MCF 10A (cell line): ENCODE measurements at regions of chr6 and their contacts with region 1.

Region 1: GRCh38 chr6:107246972-107247615 is 131.8 kb upstream of the BEND3 start:
- DNase-seq: peak; percentile 93
- H3K4me3 Mint-ChIP-seq: peak overlapping the region; percentile 65
- H3K27ac Mint-ChIP-seq: peak overlapping the region; percentile 95
- H3K4me1 Mint-ChIP-seq: peaks cover 25% of the 10 kb centered on the region
- H3K27me3 Mint-ChIP-seq: no peaks in the 10 kb centered on the region
- CTCF ChIP-seq: no peak

Region 2: GRCh38 chr6:107228754-107229153 is 18.3 kb before region 1 on chr6:
- CTCF ChIA-PET with region 1: interaction called, 12 read pairs
- POLR2A ChIA-PET with region 1: interaction called, 23 read pairs
- intact Hi-C with region 1: no loop called
- DNase-seq: no peak
- H3K4me3 Mint-ChIP-seq: no peak overlapping the region
- H3K27ac Mint-ChIP-seq: no peak overlapping the region
- H3K4me1 Mint-ChIP-seq: peaks cover 13% of the 10 kb centered on the region
- H3K27me3 Mint-ChIP-seq: no peaks in the 10 kb centered on the region
- CTCF ChIP-seq: no peak

Region 3: GRCh38 chr6:107264357-107264840 is 17.3 kb after region 1 on chr6:
- CTCF ChIA-PET with region 1: interaction called, 7 read pairs
- POLR2A ChIA-PET with region 1: interaction called, 26 read pairs
- intact Hi-C with region 1: no loop called
- DNase-seq: peak; percentile 69
- H3K4me3 Mint-ChIP-seq: no peak overlapping the region
- H3K27ac Mint-ChIP-seq: peak overlapping the region; percentile 7
- H3K4me1 Mint-ChIP-seq: peaks cover 10% of the 10 kb centered on the region
- H3K27me3 Mint-ChIP-seq: no peaks in the 10 kb centered on the region
- CTCF ChIP-seq: no peak

Region 4: DNA sequence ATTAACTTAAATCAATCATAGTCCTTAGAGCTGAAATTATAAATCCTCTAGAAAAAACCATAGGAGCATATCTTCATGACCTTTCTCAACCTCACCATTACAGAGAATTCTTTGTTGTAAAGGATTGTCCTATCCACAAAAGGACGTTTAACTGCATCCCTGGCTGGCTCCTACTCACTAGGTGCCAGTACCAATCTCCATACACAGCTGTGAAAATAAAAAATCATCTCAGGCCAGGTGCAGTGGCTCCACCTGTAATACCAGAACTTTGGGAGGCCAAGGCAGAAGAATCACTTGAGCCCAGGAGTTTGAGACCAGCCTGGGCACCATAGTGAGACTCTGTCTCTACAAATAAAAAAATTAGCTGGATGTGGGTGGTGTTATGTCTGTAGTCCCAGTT is 122.4 kb after region 1 on chr6:
- CTCF ChIA-PET with region 1: no interaction called
- POLR2A ChIA-PET with region 1: no interaction called
- intact Hi-C with region 1: no loop called
- DNase-seq: no peak
- H3K4me3 Mint-ChIP-seq: no peak overlapping the region
- H3K27ac Mint-ChIP-seq: no peak overlapping the region
- H3K4me1 Mint-ChIP-seq: no peaks in the 10 kb centered on the region
- H3K27me3 Mint-ChIP-seq: no peaks in the 10 kb centered on the region
- CTCF ChIP-seq: no peak

Region 5: GRCh38 chr6:107592806-107593205 is 345.7 kb after region 1 on chr6:
- CTCF ChIA-PET with region 1: no interaction called
- POLR2A ChIA-PET with region 1: no interaction called
- intact Hi-C with region 1: no loop called
- DNase-seq: no peak
- H3K4me3 Mint-ChIP-seq: no peak overlapping the region
- H3K27ac Mint-ChIP-seq: no peak overlapping the region
- H3K4me1 Mint-ChIP-seq: no peaks in the 10 kb centered on the region
- H3K27me3 Mint-ChIP-seq: peaks cover 46% of the 10 kb centered on the region
- CTCF ChIP-seq: no peak